ENCODE measurements at regions of chr10 and their contacts with region 1.

Region 1: GRCh38 chr10:125419831-125420230 is 259.5 kb upstream of the CTBP2 start:
- DNase-seq: no peak
- H3K4me3 ChIP-seq: no peak overlapping the region
- H3K27ac ChIP-seq: no peak overlapping the region
- H3K4me1 ChIP-seq: no peaks in the 10 kb centered on the region
- H3K27me3 ChIP-seq: no peaks in the 10 kb centered on the region
- CTCF ChIP-seq: no peak

Region 2: GRCh38 chr10:125401462-125401861 is 18.4 kb before region 1 on chr10:
- CTCF ChIA-PET with region 1: no interaction called
- POLR2A ChIA-PET with region 1: interaction called, 10 read pairs
- intact Hi-C with region 1: no loop called
- DNase-seq: no peak
- H3K4me3 ChIP-seq: no peak overlapping the region
- H3K27ac ChIP-seq: no peak overlapping the region
- H3K4me1 ChIP-seq: peaks cover 3% of the 10 kb centered on the region
- H3K27me3 ChIP-seq: no peaks in the 10 kb centered on the region
- CTCF ChIP-seq: no peak

Region 3: DNA sequence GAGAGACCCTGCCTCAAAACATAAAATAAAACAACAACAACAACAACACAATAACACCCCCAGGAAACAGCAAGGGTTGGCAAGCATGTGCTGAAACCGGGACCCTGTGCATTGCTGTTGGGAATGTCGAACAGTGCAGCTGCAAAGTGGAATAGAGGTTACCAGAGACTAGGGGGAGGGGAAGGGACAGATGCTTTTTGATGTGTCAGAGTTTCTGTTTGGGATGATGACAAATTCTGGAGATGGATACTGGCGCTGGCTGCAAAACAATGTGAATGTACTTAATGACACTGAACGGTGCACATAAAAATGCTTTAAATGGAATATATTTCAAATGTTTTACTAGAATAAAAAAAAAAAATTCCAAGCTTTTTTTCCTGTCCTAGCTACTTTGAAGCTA is 21.3 kb after region 1 on chr10:
- CTCF ChIA-PET with region 1: no interaction called
- POLR2A ChIA-PET with region 1: no interaction called
- intact Hi-C with region 1: no loop called
- DNase-seq: peak in 1 of 2 experiments; percentile 40
- H3K4me3 ChIP-seq: no peak overlapping the region
- H3K27ac ChIP-seq: no peak overlapping the region
- H3K4me1 ChIP-seq: no peaks in the 10 kb centered on the region
- H3K27me3 ChIP-seq: no peaks in the 10 kb centered on the region
- CTCF ChIP-seq: no peak